HEK293 (cell line): ENCODE measurements at regions of chr16 and their contacts with region 1.

Region 1: GRCh38 chr16:10964039-10964890 is 19.9 kb downstream of the CLEC16A start:
- H3K4me3 ChIP-seq: no peak overlapping the region
- H3K27ac ChIP-seq: no peak overlapping the region
- H3K4me1 ChIP-seq: no peaks in the 10 kb centered on the region
- CTCF ChIP-seq: peak; percentile 84

Region 2: GRCh38 chr16:10949370-10949970 is 14.8 kb before region 1 on chr16:
- CTCF ChIA-PET with region 1: interaction called, 72 read pairs
- POLR2A ChIA-PET with region 1: no interaction called
- H3K4me3 ChIP-seq: no peak overlapping the region
- H3K27ac ChIP-seq: no peak overlapping the region
- H3K4me1 ChIP-seq: peaks cover 23% of the 10 kb centered on the region
- CTCF ChIP-seq: no peak

Region 3: DNA sequence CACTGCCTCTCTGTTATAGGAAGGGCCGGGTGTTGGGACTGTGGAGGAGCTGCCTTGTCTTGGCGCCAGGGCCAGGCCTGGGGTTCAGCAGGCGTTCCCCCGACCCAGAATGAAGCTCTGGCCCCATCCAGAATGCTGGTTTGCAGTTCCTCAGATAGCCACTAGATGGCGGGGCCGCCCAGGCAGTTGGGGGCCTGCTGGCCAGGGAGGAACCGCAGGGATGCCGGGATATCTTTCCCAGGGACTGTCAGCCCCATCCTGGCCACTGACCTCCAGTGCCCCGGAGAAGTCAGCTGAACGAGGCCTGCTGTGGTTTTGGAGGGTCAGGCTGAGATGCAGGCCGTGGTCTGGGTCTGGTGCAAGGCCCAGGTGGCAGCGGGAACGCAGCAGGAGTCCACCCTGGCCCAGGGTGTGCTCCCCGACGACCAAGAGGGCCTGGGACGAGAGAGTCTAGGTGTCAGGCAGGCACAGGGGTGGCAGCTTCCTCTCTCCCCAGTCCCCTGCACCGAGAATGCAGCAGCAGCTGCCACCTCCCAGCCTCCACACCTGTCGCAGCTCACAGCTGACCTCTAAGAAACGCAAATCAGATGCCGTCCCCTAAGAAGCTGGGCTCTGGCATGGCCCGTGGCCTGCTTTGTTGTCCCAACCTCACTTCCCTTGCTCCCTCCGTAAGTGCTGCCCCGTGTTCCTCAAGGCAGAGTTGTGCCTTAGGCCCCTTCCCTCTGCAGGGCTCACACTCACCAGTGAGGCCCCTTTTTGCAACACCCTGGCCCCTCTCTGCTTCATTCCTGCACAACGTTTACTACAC is 432.2 kb after region 1 on chr16:
- CTCF ChIA-PET with region 1: interaction called, 18 read pairs
- POLR2A ChIA-PET with region 1: no interaction called
- H3K4me3 ChIP-seq: no peak overlapping the region
- H3K27ac ChIP-seq: no peak overlapping the region
- H3K4me1 ChIP-seq: no peaks in the 10 kb centered on the region
- CTCF ChIP-seq: peak; percentile 93